Common myeloid progenitor, CD34-positive (primary cell): ENCODE measurements at regions of chr13 and their contacts with region 1.

Region 1: GRCh38 chr13:91185294-91185863 is 162.1 kb upstream of the MIR17HG start:
- DNase-seq: peak; percentile 45 to 74 (median 68)
- H3K4me3 ChIP-seq: no peak overlapping the region
- H3K27ac ChIP-seq: no peak overlapping the region
- H3K4me1 ChIP-seq: peaks cover 0 to 24% (median 5%) of the 10 kb centered on the region in 4 experiments
- H3K27me3 ChIP-seq: no peaks in the 10 kb centered on the region

Region 2: GRCh38 chr13:91133941-91134802 is 51.2 kb before region 1 on chr13:
- CTCF ChIA-PET with region 1: interaction called, 51 read pairs
- POLR2A ChIA-PET with region 1: no interaction called
- DNase-seq: peak; percentile 65 to 67 (median 67)
- H3K4me3 ChIP-seq: peak overlapping the region in 4 of 7 experiments; percentile 30 to 74 (median 65)
- H3K27ac ChIP-seq: peak overlapping the region in 1 of 2 experiments; percentile 7
- H3K4me1 ChIP-seq: peaks cover 6 to 32% (median 10%) of the 10 kb centered on the region in 4 experiments
- H3K27me3 ChIP-seq: no peaks in the 10 kb centered on the region

Region 3: GRCh38 chr13:91154558-91155353 is 30.6 kb before region 1 on chr13:
- CTCF ChIA-PET with region 1: interaction called, 21 read pairs
- POLR2A ChIA-PET with region 1: no interaction called
- DNase-seq: peak; percentile 31 to 89 (median 84)
- H3K4me3 ChIP-seq: no peak overlapping the region
- H3K27ac ChIP-seq: peak overlapping the region in 1 of 2 experiments; percentile 39
- H3K4me1 ChIP-seq: peaks cover 4 to 35% (median 13%) of the 10 kb centered on the region in 4 experiments
- H3K27me3 ChIP-seq: no peaks in the 10 kb centered on the region

Region 4: DNA sequence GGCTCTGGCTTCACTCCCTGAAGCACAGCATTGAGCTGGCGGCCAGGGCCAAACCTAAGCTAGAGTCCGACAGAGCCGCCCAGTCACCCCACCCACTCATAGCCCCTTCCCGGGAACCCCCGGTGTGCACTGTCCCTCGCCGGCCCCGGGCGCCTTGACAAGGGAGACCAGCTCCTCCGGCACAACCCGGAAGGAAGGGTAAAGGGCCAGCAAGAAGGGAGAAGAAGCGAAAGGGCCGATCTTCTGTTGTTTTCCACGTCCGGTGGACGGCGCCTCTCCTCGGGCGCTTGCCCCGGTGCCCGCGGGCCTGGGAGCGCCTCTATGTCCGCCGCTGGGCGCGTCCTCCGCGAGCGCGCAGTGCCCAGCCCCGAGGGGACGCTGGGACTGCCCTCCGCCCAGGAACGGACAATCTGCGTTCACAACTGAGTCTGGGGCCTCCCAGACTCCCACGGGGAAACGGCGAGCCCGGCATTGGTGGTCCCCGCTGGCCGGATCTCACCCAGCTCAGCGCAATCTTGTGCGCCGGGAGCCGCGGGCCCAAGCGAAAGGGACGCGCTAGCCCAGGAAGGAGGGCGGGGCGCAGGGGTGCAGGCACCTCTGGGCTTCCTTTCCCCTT is 10.4 kb before region 1 on chr13:
- CTCF ChIA-PET with region 1: interaction called, 14 read pairs
- POLR2A ChIA-PET with region 1: interaction called, 3 read pairs
- DNase-seq: peak in 1 of 3 donors; percentile 34
- H3K4me3 ChIP-seq: peak overlapping the region in 6 of 7 experiments; percentile 61 to 86 (median 74)
- H3K27ac ChIP-seq: peak overlapping the region in 1 of 2 experiments; percentile 23
- H3K4me1 ChIP-seq: peaks cover 0 to 6% (median 0%) of the 10 kb centered on the region in 4 experiments
- H3K27me3 ChIP-seq: no peaks in the 10 kb centered on the region

Region 5: GRCh38 chr13:91247768-91248167 is 62.4 kb after region 1 on chr13:
- CTCF ChIA-PET with region 1: interaction called, 56 read pairs
- POLR2A ChIA-PET with region 1: no interaction called
- DNase-seq: peak; percentile 41 to 69 (median 58)
- H3K4me3 ChIP-seq: no peak overlapping the region
- H3K27ac ChIP-seq: no peak overlapping the region
- H3K4me1 ChIP-seq: peaks cover 16 to 68% (median 31%) of the 10 kb centered on the region in 4 experiments
- H3K27me3 ChIP-seq: no peaks in the 10 kb centered on the region